Gastrocnemius medialis (tissue), 4 donors: ENCODE measurements at regions of chr12 and their contacts with region 1.

Region 1: GRCh38 chr12:125919856-125920470 is 854.7 kb downstream of the AACS start:
- DNase-seq: no peak
- ATAC-seq: no peak
- H3K4me3 ChIP-seq: no peak overlapping the region
- H3K27ac ChIP-seq: no peak overlapping the region
- H3K4me1 ChIP-seq: no peaks in the 10 kb centered on the region
- H3K27me3 ChIP-seq: no peaks in the 10 kb centered on the region
- CTCF ChIP-seq: no peak
- POLR2A ChIP-seq: no peak

Region 2: GRCh38 chr12:125882141-125882540 is 37.8 kb before region 1 on chr12:
- in situ Hi-C with region 1: no loop called
- intact Hi-C with region 1: no loop called
- DNase-seq: no peak
- ATAC-seq: no peak
- H3K4me3 ChIP-seq: no peak overlapping the region
- H3K27ac ChIP-seq: no peak overlapping the region
- H3K4me1 ChIP-seq: no peaks in the 10 kb centered on the region
- H3K27me3 ChIP-seq: no peaks in the 10 kb centered on the region
- CTCF ChIP-seq: no peak
- POLR2A ChIP-seq: no peak

Region 3: GRCh38 chr12:126757326-126757725 is 837.4 kb after region 1 on chr12:
- in situ Hi-C with region 1: no loop called
- intact Hi-C with region 1: loop called (anchors 5 kb)
- DNase-seq: no peak
- ATAC-seq: no peak
- H3K4me3 ChIP-seq: no peak overlapping the region
- H3K27ac ChIP-seq: no peak overlapping the region
- H3K4me1 ChIP-seq: no peaks in the 10 kb centered on the region
- H3K27me3 ChIP-seq: no peaks in the 10 kb centered on the region
- CTCF ChIP-seq: no peak
- POLR2A ChIP-seq: no peak